ENCODE measurements at regions of chr1 and their contacts with region 1.

Region 1: DNA sequence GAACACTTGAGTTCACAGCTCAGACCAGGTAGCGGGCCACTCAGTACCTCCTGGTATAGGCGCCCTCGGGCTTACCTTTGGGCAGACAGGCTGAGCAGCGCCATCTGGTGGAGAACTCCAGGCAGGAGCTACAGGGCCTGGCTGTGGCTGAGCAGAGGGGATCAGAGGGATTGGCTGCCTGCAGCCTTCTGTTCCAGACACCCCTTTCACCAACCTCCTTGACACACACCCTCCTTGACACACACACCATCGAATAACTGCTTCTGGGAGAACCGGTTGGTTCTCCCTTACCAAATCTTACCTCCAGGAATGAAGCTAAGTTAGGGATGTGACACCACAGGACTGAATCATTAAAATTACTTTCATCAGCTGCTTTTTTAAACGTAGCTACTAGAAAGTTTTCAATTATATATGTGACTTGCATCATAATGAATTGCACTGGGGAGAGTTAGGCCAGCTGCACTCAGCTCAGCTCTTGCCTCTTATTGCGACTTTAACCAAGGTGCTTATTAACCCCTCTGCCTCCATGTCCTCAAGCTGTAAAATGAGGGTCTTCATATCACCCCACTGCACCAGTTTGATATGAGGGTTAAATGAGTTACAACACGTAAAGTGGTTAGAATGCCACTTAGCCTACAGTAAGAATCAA is 6.6 kb downstream of the LIN28A start:
- DNase-seq: peak; percentile 92
- H3K4me3 Mint-ChIP-seq: no peak overlapping the region
- H3K27ac Mint-ChIP-seq: no peak overlapping the region
- H3K4me1 Mint-ChIP-seq: peaks cover 4% of the 10 kb centered on the region
- H3K27me3 Mint-ChIP-seq: peaks cover 60% of the 10 kb centered on the region

Region 2: DNA sequence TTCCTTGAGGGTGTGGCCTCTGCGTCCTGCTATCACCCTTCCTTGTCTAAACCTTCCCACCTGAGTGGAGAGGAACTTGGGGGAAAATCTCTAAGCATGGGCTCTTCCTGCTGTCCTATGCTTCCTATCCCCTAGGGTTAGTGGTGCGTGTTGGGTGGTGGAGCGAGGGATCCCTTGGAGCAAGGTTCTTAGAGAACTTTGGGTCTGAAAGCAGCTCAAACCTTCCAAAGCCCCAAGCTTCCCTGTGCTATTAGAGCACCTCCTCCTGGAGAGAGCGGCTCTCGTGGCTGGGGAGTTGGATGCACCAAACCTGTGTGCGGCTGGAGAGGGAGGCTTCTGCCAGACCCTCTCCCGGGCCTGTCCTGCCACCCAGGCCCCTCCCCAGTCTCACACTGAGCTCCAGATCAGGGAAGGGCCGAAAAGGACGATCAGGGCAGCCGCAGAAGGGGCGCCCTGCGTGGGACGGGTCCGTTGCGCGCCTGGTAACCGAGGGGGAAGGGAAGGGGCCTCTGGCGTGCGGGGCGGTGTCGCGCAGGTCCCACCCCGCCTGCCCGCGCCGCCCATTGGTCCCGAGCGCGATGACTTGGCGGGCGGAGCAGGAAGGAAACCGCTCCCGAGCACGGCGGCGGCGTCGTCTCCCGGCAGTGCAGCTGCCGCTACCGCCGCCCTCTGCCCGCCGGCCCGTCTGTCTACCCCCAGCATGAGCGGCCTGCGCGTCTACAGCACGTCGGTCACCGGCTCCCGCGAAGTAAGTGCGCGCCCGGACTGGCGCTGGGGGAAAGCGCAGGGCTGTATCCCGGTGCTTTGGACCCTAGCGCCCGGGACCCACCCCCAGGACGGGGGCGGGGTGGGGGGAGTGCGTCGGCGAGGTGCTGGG is 137.5 kb before region 1 on chr1 and contains the start of gene SH3BGRL3:
- CTCF ChIA-PET with region 1: interaction called, 13 read pairs
- DNase-seq: peak; percentile 91
- H3K4me3 Mint-ChIP-seq: peak within 1 kb of the TSS; percentile 91
- H3K27ac Mint-ChIP-seq: peak within 1 kb of the TSS; percentile 93
- H3K4me1 Mint-ChIP-seq: peaks cover 88% of the 10 kb centered on the region
- H3K27me3 Mint-ChIP-seq: no peaks in the 10 kb centered on the region

Region 3: DNA sequence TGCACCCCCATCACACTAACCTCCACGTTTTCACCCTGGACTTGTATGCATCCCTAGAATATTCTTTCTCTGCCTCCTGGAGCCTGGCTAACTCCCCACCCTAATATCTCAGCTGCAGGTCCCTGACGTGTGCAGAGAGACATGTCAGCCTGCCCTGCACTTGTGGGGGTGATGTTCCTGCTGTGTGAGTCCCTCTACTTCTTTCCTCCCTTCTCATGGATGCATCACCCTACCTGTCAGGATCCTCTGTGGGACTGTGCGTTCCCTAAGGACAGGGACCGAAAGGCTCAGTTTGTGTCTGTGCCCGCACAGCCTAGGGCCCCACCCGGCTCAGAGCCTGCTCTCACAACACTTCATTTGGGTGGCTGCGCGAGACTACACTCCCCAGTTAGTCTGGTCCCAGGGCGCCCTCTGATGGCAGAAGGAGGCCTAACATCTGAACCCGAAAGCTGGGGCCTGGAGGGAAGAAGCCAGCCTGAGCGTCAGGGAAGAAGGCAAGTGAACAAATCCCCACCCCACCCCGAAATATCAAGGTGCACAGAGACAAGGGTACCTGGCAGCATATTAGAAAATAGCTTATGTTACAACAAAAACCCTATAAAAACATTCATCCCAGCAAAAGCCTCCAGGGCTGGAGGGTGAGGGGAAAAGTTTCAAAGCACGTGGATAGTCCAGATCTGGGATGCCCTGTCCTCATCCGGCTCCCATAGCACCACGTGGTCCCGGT is 95.8 kb before region 1 on chr1:
- CTCF ChIA-PET with region 1: interaction called, 30 read pairs
- DNase-seq: peak; percentile 97
- H3K4me3 Mint-ChIP-seq: peak overlapping the region; percentile 90
- H3K27ac Mint-ChIP-seq: peak overlapping the region; percentile 96
- H3K4me1 Mint-ChIP-seq: peaks cover 58% of the 10 kb centered on the region
- H3K27me3 Mint-ChIP-seq: no peaks in the 10 kb centered on the region

Region 4: DNA sequence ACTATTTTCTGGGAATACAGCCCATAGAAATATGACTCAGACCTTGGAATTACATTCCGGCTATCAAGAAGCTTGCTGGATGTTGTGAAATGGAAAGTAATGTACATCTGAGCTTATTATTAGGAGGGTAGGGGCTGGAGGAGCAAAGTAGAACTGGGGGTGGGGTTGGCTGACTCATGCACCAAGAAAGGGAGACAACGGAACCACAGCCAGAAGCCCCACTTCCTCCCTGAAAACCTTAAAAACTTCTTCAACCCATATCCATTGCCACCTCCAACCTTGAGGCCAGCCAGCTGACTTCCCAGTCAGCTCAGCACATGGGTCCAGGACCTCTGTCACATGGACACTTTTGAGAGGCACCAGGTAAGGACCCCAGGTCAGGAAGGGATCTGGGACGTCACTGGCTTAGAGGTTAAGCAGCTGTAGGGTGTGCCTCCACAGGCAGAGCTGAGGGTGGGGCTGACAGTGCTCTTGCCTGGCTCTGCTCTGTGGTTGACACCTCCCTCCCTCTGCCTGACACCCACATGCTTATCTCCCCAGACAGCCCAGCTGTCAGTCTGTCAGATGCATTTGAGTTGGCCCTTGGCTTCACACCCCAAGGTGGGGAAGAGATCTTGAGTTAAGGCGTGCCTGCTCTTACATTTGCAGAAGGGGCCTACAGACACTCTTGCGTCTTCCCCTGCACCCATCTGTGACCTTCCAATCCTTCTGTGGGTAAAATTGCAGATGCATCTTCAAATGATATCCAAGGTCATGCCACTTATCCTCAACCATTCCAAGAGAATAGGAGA is 39.0 kb before region 1 on chr1:
- CTCF ChIA-PET with region 1: interaction called, 11 read pairs
- DNase-seq: peak; percentile 87
- H3K4me3 Mint-ChIP-seq: peak overlapping the region; percentile 33
- H3K27ac Mint-ChIP-seq: peak overlapping the region; percentile 86
- H3K4me1 Mint-ChIP-seq: peaks cover 79% of the 10 kb centered on the region
- H3K27me3 Mint-ChIP-seq: no peaks in the 10 kb centered on the region

Region 5: DNA sequence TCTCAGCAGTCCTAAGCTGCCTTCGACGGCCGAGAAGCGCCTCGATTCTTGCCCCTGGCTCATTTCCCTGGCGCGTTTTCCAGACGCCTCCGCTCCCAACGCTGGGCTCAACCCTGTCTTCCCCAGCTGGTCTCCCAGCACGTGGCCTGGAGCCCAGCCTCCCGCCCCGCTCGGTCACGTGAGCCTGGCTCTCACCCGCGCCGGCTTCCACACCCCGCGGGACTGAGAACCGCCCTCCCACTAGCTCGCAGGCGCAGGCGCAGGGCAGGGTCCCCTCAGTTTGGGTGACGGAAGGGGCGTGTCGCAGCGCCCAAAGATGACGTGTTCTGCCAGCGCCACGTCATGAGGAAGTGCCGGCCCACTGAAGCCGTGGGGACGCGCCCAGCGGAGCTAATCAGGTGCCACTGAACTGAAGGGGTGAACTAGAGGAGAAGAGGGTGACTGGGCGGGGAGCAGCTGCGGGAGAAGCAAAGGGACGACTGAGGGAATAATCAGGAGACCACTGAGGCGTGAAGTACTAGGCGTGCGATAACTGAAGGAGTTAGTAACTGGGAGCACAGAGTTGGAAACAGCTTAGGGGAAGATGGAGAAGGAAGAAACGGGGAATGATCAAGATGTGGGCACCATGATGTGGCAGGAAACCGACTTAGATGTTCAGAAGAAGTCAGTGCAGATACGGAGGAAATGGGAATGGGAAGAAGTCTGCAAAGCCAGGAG is 14.9 kb after region 1 on chr1 and contains the start of gene DHDDS:
- CTCF ChIA-PET with region 1: interaction called, 22 read pairs
- DNase-seq: peak; percentile 99
- H3K4me3 Mint-ChIP-seq: peak within 1 kb of the TSS; percentile 96
- H3K27ac Mint-ChIP-seq: peak within 1 kb of the TSS; percentile 94
- H3K4me1 Mint-ChIP-seq: peaks cover 26% of the 10 kb centered on the region
- H3K27me3 Mint-ChIP-seq: peaks cover 17% of the 10 kb centered on the region

Measured in activated naive CD4-positive, alpha-beta T cell treated with anti-CD3 and anti-CD28 coated beads, Interleukin-2, amount 10 ng/mL, durations not matched to agents 7 days and 5 days (primary cell).